Activated naive CD4-positive, alpha-beta T cell treated with anti-CD3 and anti-CD28 coated beads for 36 hours (primary cell): ENCODE measurements at regions of chr1 and their contacts with region 1.

Region 1: DNA sequence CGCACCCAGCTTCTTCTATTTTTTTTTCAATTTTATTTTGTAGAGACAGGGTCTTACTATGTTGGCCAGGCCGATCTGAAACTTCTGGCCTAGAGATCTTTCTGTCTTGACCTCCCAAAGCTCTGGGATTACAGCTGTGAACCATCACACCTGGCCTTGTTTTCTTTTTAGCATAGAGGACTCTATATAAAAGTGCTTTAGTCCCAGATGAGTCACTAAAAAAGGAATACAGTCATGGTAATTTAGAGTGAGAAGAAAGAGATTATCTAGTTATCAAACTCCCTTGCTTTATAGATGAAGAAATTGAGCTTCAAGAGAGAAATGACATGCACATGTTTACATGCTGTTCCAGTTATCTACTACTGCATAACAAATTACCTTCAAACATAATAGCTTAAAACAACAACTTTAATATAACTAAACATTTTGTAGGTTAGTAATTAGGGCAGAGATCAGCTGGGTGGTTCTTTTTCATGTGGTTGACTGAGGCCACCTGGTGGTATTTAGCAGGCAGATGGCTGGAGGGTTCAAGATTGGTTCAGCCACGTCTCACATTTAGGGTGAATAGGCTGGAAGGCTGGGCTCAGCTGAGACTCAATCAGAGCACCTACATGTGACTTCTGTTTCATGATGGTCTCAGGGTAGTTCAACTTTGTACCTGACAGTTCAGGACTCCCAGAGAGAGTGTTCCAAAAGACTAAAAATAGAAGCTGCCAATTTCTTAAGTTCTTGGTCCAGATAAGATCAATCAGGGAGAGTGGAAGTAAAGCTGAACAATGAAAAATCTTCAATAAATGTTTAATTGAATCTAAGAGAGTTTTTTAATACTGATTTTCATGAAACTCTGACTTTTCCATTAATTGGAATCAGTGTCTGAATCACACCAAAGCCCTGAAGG is 16.9 kb upstream of the MTF2 start:
- DNase-seq: peak; percentile 67
- H3K4me3 Mint-ChIP-seq: no peak overlapping the region
- H3K27ac Mint-ChIP-seq: no peak overlapping the region
- H3K4me1 Mint-ChIP-seq: no peaks in the 10 kb centered on the region
- H3K27me3 Mint-ChIP-seq: no peaks in the 10 kb centered on the region

Region 2: DNA sequence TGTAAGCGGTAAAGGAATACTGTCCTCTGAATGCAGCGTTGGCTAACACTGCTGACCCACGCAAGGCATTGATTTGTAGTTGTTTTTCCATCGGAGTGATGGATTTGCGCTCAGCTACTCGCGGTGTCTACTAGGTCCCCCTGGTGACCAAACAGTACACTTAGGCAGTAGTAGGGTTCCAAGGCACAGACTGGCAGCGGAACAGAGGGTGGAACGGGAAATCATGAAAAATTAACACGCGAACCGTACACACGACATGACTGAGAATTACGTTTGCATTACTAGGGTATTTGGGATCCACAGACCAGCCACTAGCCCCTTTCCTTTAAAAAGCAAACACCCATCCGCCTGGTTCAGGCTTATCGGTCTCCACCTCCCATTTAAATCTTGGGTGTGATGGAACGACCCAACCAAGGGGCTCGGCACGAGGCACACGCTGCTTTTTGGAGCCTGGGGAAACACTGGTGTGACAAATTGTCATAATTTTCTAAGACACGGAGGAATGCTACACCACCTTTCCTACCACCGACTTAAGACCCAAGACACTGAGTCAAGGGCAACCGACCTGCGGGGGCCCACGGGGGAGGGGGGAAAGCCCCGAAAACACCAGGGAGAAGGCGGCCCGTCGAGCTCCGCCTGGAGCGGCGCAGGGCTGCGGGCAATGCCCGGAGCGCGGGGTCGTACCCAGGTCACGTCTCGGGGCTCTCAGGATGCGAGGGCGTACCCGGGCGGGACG is 101.6 kb before region 1 on chr1:
- CTCF ChIA-PET with region 1: no interaction called
- intact Hi-C with region 1: loop called (anchors 2 kb)
- DNase-seq: peak; percentile 76
- H3K4me3 Mint-ChIP-seq: peak overlapping the region; percentile 89
- H3K27ac Mint-ChIP-seq: peak overlapping the region; percentile 94
- H3K4me1 Mint-ChIP-seq: peaks cover 41% of the 10 kb centered on the region
- H3K27me3 Mint-ChIP-seq: no peaks in the 10 kb centered on the region

Region 3: GRCh38 chr1:93015590-93015989 is 46.6 kb before region 1 on chr1:
- CTCF ChIA-PET with region 1: interaction called, 53 read pairs
- intact Hi-C with region 1: no loop called
- DNase-seq: no peak
- H3K4me3 Mint-ChIP-seq: no peak overlapping the region
- H3K27ac Mint-ChIP-seq: no peak overlapping the region
- H3K4me1 Mint-ChIP-seq: peaks cover 2% of the 10 kb centered on the region
- H3K27me3 Mint-ChIP-seq: peaks cover 6% of the 10 kb centered on the region

Region 4: DNA sequence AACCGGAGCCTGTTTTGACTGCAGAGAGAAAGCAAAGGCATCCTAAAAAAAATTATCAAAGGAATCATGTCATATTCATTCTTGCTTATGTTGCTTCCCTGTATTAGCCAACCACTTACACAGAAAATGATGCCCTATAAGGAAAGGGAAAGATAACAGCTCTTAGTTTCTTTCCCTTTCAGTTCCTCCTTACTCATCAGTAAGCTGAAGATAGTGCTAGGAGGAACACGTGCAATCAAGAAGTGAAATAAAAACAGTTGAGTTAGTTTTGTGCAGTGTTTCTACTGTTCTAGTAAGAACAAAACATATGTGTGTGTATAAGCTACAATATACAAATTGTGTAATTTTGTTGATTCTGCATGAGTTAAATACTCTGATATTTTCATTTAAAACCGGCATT is 28.4 kb before region 1 on chr1:
- CTCF ChIA-PET with region 1: interaction called, 11 read pairs
- intact Hi-C with region 1: no loop called
- DNase-seq: no peak
- H3K4me3 Mint-ChIP-seq: no peak overlapping the region
- H3K27ac Mint-ChIP-seq: no peak overlapping the region
- H3K4me1 Mint-ChIP-seq: peaks cover 29% of the 10 kb centered on the region
- H3K27me3 Mint-ChIP-seq: no peaks in the 10 kb centered on the region

Region 5: DNA sequence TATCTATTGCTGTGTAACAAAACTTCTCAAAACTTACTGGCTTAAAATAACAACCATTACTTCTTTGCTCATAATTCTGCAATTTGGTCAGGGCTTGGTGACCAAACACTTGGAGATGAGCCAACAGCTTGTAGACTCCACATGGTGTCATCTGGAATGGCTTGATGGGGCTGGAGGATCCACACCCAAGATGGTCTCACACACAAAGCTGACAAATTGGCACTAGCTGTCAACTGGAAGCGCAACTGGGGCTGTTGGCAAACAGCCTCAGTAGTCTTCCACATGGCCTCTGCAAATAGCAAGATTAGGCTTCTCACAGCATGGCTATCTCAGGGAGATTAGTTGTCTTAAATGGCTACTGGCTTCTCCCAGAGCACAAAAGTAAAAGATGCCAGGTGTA is 10.2 kb before region 1 on chr1:
- CTCF ChIA-PET with region 1: interaction called, 14 read pairs
- intact Hi-C with region 1: no loop called
- DNase-seq: no peak
- H3K4me3 Mint-ChIP-seq: no peak overlapping the region
- H3K27ac Mint-ChIP-seq: no peak overlapping the region
- H3K4me1 Mint-ChIP-seq: no peaks in the 10 kb centered on the region
- H3K27me3 Mint-ChIP-seq: no peaks in the 10 kb centered on the region

Region 6: DNA sequence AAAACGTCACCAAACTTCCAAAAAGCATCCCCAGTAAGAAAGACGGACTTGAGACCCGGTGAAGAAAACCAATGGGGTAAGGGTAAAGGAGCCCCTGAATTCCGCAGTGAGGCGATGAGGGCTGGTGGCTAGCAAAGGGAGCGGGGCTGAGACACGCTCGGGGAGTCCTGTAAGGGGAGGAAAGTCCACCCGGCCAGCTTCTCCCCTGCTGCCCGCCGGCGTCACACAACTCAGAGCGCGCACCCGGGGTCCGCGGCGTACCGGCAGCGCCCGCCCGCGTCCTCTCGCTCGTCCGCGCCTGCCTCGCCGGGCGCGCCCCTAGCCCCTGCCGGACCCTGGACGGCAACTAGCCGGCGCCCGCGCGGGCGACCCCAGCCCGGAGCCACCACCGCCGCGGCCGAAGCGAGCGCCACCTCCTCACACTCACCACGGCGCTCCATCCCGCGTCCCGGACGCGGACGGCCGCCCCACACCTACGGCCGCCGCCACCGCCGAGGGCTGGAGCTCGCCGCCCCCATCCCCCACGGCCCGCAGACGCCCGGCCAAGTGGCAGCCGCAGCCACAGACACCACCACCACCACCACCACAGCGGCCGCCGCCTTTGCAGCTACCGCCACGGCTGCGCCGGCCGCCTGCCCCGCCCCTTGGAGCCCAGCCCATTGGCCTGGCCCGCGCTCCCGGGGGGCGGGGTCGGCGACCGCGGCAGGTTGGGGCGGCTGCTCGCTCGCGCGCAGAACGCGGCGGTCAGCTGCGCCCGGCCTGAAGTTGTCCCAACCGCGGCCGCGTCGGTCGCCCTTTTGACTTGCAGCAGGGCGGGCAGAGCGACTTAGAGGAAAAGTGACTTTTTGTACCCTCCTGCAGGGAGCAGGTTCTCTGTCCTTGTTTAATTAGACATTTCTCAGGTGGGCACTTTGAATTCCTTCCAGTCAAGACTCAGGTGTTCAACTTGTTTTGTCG is 1185.3 kb after region 1 on chr1:
- CTCF ChIA-PET with region 1: no interaction called
- intact Hi-C with region 1: no loop called
- DNase-seq: peak; percentile 39
- H3K4me3 Mint-ChIP-seq: peak overlapping the region; percentile 75
- H3K27ac Mint-ChIP-seq: no peak overlapping the region
- H3K4me1 Mint-ChIP-seq: peaks cover 10% of the 10 kb centered on the region
- H3K27me3 Mint-ChIP-seq: peaks cover 59% of the 10 kb centered on the region